Psoas muscle (tissue), 8 donors: ENCODE measurements at regions of chr1 and their contacts with region 1.

Region 1: GRCh38 chr1:33219881-33220661 is 36.2 kb upstream of the ZNF362 start:
- DNase-seq: no peak
- ATAC-seq: no peak
- H3K4me3 ChIP-seq: no peak overlapping the region
- H3K27ac ChIP-seq: no peak overlapping the region
- H3K4me1 ChIP-seq: no peaks in the 10 kb centered on the region
- H3K27me3 ChIP-seq: no peaks in the 10 kb centered on the region
- CTCF ChIP-seq: no peak

Region 2: DNA sequence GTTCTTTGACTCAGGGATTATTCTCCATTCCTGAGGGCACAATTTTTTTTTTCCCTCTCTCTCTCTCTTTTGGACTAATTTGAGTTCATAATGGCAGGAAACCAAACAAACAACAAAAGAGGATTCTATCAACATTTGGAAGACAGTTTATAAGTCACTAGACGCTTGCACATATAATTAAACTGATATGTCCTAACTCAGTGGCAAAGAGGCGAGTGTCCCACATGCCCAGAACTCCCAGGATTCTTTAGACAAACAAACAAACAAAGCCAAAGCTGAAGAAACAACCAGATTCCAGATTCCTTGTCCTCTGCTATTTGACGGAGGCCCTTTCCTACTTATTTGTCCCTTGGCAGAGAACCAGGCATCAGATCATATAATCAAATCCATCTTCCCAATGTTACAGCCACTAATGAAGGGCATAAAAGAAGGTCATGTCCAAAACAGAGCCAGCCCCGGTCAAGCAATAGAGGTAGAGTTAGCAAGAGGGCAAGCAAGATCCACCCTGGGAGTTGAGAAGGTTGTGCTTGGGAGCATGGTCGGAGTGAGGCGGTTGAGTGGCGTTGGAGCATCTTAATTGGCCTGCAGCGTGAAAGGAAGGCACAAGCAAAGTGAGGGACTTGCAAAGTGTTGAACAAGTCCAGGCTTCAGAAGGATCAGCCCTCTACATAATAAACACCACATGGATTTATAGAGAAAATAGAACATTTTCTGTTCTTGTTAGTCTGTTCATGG is 66.5 kb after region 1 on chr1:
- intact Hi-C with region 1: no loop called
- DNase-seq: no peak
- ATAC-seq: no peak
- H3K4me3 ChIP-seq: no peak overlapping the region
- H3K27ac ChIP-seq: no peak overlapping the region
- H3K4me1 ChIP-seq: peaks cover 14% of the 10 kb centered on the region
- H3K27me3 ChIP-seq: no peaks in the 10 kb centered on the region
- CTCF ChIP-seq: no peak

Region 3: DNA sequence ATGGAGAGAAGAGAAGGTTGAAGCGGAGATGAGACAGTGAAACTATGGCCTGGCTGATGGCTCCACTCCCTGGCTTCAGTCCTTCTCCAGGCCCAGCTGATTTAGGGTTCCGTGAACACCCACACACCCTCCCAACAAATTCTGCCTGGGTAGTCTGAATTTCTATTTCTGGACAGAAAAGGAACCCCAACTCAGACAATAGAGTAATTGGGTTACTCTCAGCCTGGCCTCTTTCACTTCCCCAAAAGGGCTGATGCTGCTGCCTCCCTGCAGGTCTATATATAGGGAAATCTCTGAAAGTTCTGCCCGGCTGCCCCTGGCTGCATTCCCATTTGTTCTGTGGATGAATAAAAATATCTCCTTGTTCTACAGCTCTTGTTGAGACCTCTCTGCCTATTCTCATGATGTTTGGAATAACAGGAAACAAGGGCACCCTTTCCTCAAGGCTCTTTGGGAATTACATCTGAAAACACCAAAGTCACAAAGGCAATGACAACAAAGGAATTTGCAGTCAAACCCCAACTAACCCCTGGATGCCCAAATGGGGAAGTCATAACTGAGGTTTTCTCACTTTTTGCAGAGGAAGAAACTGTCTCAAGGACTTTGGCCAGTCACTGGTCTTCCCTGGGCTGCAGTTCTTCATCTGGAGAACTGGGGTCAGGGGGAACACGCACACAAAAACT is 241.0 kb after region 1 on chr1:
- intact Hi-C with region 1: loop called (anchors 5 to 10 kb)
- DNase-seq: no peak
- ATAC-seq: peak in 2 of 4 donors; percentile 15 to 29
- H3K4me3 ChIP-seq: no peak overlapping the region
- H3K27ac ChIP-seq: peak overlapping the region; percentile 70
- H3K4me1 ChIP-seq: peaks cover 24% of the 10 kb centered on the region
- H3K27me3 ChIP-seq: no peaks in the 10 kb centered on the region
- CTCF ChIP-seq: no peak

Region 4: GRCh38 chr1:33466159-33466558 is 246.1 kb after region 1 on chr1:
- intact Hi-C with region 1: loop called (anchors 5 to 10 kb)
- DNase-seq: no peak
- ATAC-seq: peak in 3 of 4 donors; percentile 52 to 76 (median 63)
- H3K4me3 ChIP-seq: no peak overlapping the region
- H3K27ac ChIP-seq: no peak overlapping the region
- H3K4me1 ChIP-seq: peaks cover 21% of the 10 kb centered on the region
- H3K27me3 ChIP-seq: no peaks in the 10 kb centered on the region
- CTCF ChIP-seq: no peak

Region 5: GRCh38 chr1:33616773-33617172 is 396.7 kb after region 1 on chr1:
- intact Hi-C with region 1: loop called (anchors 5 to 10 kb)
- DNase-seq: no peak
- ATAC-seq: no peak
- H3K4me3 ChIP-seq: no peak overlapping the region
- H3K27ac ChIP-seq: no peak overlapping the region
- H3K4me1 ChIP-seq: no peaks in the 10 kb centered on the region
- H3K27me3 ChIP-seq: no peaks in the 10 kb centered on the region
- CTCF ChIP-seq: no peak